GM12878 (cell line): ENCODE measurements at regions of chr6 and their contacts with region 1.

Region 1: GRCh38 chr6:41027799-41028628 is 11.0 kb downstream of the UNC5CL start:
- DNase-seq: peak; percentile 30
- ATAC-seq: peak; percentile 97
- H3K4me3 ChIP-seq: peak overlapping the region; percentile 38; the same call in 1 of the 2 replicates
- H3K27ac ChIP-seq: peak overlapping the region; percentile 29; the same call in 1 of the 2 replicates
- H3K4me1 ChIP-seq: peaks cover 8% of the 10 kb centered on the region
- H3K27me3 ChIP-seq: no peaks in the 10 kb centered on the region
- CTCF ChIP-seq: peak; percentile 96 to 99 (median 98); a peak in 5 of 6 replicates
- EP300 ChIP-seq: no peak
- POLR2A ChIP-seq: peak; percentile 80
- RAD21 ChIP-seq: peak; percentile 75

Region 2: GRCh38 chr6:40999569-40999968 is 28.4 kb before region 1 on chr6:
- CTCF ChIA-PET with region 1: interaction called, 30 read pairs
- POLR2A ChIA-PET with region 1: no interaction called
- RAD21 ChIA-PET with region 1: interaction called, 6 read pairs
- SMC1A ChIA-PET with region 1: interaction called, 7 read pairs
- in situ Hi-C with region 1: no loop called
- intact Hi-C with region 1: no loop called
- DNase-seq: peak; percentile 1
- ATAC-seq: peak; percentile 87
- H3K4me3 ChIP-seq: no peak overlapping the region
- H3K27ac ChIP-seq: no peak overlapping the region
- H3K4me1 ChIP-seq: no peaks in the 10 kb centered on the region
- H3K27me3 ChIP-seq: no peaks in the 10 kb centered on the region; a peak in 2 of 4 replicates
- CTCF ChIP-seq: peak; percentile 50 to 60 (median 55); a peak in 5 of 6 replicates
- EP300 ChIP-seq: no peak
- POLR2A ChIP-seq: no peak
- RAD21 ChIP-seq: no peak

Region 3: DNA sequence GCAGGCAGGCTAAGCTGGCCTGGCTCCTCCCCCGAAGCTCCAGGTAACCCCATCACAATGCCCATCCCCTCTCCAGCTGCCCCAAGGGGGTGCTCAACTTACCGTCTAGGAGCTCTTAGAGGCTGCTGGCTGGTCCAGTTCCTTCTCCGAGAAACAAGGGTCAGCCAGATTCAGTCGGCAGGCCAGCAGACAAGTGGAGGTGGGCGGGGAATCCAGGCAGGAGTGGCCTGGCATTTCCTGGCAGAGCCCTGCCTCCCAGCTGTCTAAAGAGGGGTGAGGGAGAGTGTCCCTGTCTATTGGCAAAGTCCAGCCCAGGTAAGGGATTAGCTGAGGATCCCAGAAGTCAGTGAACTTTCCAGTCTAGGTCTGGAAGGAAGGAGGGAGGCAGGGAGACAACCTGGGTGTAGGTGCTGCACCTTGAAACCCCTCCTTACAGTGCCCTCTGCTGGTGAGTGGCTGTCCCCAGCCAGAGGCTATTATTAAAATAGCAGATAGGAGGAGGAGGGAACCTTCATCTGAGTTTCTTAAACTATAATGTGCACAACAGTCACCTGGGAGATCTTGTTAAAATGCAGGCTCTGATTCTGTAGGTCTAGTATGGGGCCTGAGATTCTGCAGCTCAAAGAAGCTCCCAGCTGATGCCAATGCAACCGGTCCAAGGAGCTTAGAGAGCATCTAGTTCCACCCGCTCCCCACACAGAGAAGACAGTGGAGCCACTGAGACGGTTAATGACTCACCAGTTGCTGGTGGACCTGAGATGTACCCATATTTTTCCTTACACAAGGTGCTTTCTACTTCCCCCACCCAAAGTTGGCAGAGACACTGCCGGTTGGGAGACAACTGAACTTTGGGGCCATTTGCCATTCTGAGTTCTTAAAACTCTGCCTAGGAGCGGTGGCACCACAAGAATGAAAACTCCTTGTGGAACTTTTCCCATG is 11.3 kb after region 1 on chr6 and contains the start of gene UNC5CL:
- CTCF ChIA-PET with region 1: interaction called, 57 read pairs
- POLR2A ChIA-PET with region 1: no interaction called
- RAD21 ChIA-PET with region 1: interaction called, 5 read pairs
- SMC1A ChIA-PET with region 1: interaction called, 13 read pairs
- in situ Hi-C with region 1: no loop called
- intact Hi-C with region 1: no loop called
- DNase-seq: no peak
- ATAC-seq: peak; percentile 92
- H3K4me3 ChIP-seq: no peak within 1 kb of the TSS
- H3K27ac ChIP-seq: no peak within 1 kb of the TSS
- H3K4me1 ChIP-seq: no peaks in the 10 kb centered on the region
- H3K27me3 ChIP-seq: no peaks in the 10 kb centered on the region
- CTCF ChIP-seq: peak; percentile 69 to 84 (median 77)
- EP300 ChIP-seq: no peak
- POLR2A ChIP-seq: no peak
- RAD21 ChIP-seq: peak; percentile 43
- polyA plus RNA-seq, gene UNC5CL: 0.11 TPM in 1 of 2 experiments, not detected in the other

Region 4: GRCh38 chr6:41045664-41046063 is 17.6 kb after region 1 on chr6:
- CTCF ChIA-PET with region 1: interaction called, 57 read pairs
- POLR2A ChIA-PET with region 1: no interaction called
- RAD21 ChIA-PET with region 1: interaction called, 5 read pairs
- SMC1A ChIA-PET with region 1: interaction called, 13 read pairs
- in situ Hi-C with region 1: no loop called
- intact Hi-C with region 1: no loop called
- DNase-seq: no peak
- ATAC-seq: no peak
- H3K4me3 ChIP-seq: no peak overlapping the region
- H3K27ac ChIP-seq: no peak overlapping the region
- H3K4me1 ChIP-seq: no peaks in the 10 kb centered on the region
- H3K27me3 ChIP-seq: no peaks in the 10 kb centered on the region
- CTCF ChIP-seq: no peak
- EP300 ChIP-seq: no peak
- POLR2A ChIP-seq: no peak
- RAD21 ChIP-seq: no peak

Region 5: GRCh38 chr6:41066867-41067304 is 38.9 kb after region 1 on chr6:
- CTCF ChIA-PET with region 1: interaction called, 30 read pairs
- POLR2A ChIA-PET with region 1: interaction called, 5 read pairs
- RAD21 ChIA-PET with region 1: no interaction called
- SMC1A ChIA-PET with region 1: interaction called, 13 read pairs
- in situ Hi-C with region 1: no loop called
- intact Hi-C with region 1: no loop called
- DNase-seq: peak; percentile 26
- ATAC-seq: 0 out of 3 replicates have a peak, but pooled peaks have one; percentile 15
- H3K4me3 ChIP-seq: no peak overlapping the region
- H3K27ac ChIP-seq: no peak overlapping the region
- H3K4me1 ChIP-seq: 0 out of 2 replicates have a peak, but pooled peaks cover 2% of the 10 kb centered on the region
- H3K27me3 ChIP-seq: no peaks in the 10 kb centered on the region
- CTCF ChIP-seq: peak; percentile 72 to 86 (median 83)
- EP300 ChIP-seq: no peak
- POLR2A ChIP-seq: no peak
- RAD21 ChIP-seq: peak; percentile 64

Region 6: GRCh38 chr6:41072676-41073623 is 44.9 kb after region 1 on chr6 and contains the start of gene NFYA:
- CTCF ChIA-PET with region 1: interaction called, 30 read pairs
- POLR2A ChIA-PET with region 1: interaction called, 5 read pairs
- RAD21 ChIA-PET with region 1: interaction called, 4 read pairs
- SMC1A ChIA-PET with region 1: interaction called, 13 read pairs
- in situ Hi-C with region 1: no loop called
- intact Hi-C with region 1: no loop called
- DNase-seq: no peak
- ATAC-seq: peak; percentile 85
- H3K4me3 ChIP-seq: peak within 1 kb of the TSS; percentile 88
- H3K27ac ChIP-seq: peak within 1 kb of the TSS; percentile 99
- H3K4me1 ChIP-seq: peaks cover 7% of the 10 kb centered on the region; the same call in 1 of the 2 replicates
- H3K27me3 ChIP-seq: no peaks in the 10 kb centered on the region
- CTCF ChIP-seq: peak in 2 of 3 experiments; percentile 32 to 34; a peak in 4 of 6 replicates
- EP300 ChIP-seq: no peak
- POLR2A ChIP-seq: peak; percentile 33
- RAD21 ChIP-seq: no peak
- polyA plus RNA-seq, gene NFYA: 6.4 to 7.3 TPM